Activated CD4-positive, alpha-beta memory T cell treated with anti-CD3 and anti-CD28 coated beads for 36 hours (primary cell): ENCODE measurements at regions of chr1 and their contacts with region 1.

Region 1: GRCh38 chr1:45686317-45687013 is at the start of gene GPBP1L1:
- DNase-seq: peak; percentile 99
- H3K4me3 Mint-ChIP-seq: peak within 1 kb of the TSS; percentile 99
- H3K27ac Mint-ChIP-seq: peak within 1 kb of the TSS; percentile 99
- H3K4me1 Mint-ChIP-seq: peaks cover 50% of the 10 kb centered on the region
- H3K27me3 Mint-ChIP-seq: no peaks in the 10 kb centered on the region
- total RNA-seq, gene GPBP1L1: 106 TPM

Region 2: GRCh38 chr1:45339789-45340570 is 346.5 kb before region 1 on chr1 and contains the starts of genes MUTYH and TOE1:
- CTCF ChIA-PET with region 1: no interaction called
- POLR2A ChIA-PET with region 1: interaction called, 4 read pairs
- intact Hi-C with region 1: loop called (anchors 1 kb)
- DNase-seq: peak; percentile 97
- H3K4me3 Mint-ChIP-seq: peak within 1 kb of the TSS; percentile 93
- H3K27ac Mint-ChIP-seq: peak within 1 kb of the TSS; percentile 98
- H3K4me1 Mint-ChIP-seq: peaks cover 34% of the 10 kb centered on the region
- H3K27me3 Mint-ChIP-seq: no peaks in the 10 kb centered on the region
- total RNA-seq, gene MUTYH: 49.2 to 51.8 TPM
- total RNA-seq, gene TOE1: 22.8 to 23.1 TPM

Region 3: DNA sequence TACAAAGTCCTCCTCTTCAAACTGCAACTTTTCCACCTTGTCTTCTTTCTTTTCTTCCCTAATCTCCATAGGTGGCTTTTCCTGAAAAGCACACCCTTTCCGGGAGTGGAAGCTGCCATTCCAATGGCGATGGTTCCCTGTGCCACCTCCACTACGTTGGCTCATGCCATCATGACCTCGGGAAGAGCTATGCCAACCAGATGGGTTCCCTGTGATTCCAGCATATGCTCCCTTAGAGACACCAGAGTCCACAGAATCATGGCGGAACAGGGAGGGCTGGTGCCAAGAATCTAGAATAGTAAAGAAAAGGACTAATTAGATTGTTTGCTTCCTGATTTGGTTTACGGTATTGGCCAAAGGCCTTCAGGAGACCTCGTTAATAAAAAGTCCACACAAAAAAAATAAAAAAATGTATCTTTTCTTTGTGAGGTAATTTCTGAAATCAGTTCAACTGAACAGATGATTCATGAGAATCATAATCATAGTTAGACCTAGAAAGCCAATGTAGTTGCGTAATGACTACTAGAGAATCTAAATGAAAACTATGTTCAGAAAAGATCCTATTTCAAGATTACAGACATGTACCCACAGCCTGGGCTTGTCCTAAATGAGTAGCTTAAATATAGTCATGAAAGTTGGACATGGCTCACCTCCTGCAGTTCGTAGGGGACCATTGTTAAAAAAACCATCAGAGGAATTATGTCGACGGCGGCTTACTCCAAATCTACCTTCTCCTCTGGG is 31.8 kb before region 1 on chr1:
- CTCF ChIA-PET with region 1: interaction called, 13 read pairs
- POLR2A ChIA-PET with region 1: interaction called, 16 read pairs
- intact Hi-C with region 1: loop called (anchors 1 kb)
- DNase-seq: peak; percentile 34
- H3K4me3 Mint-ChIP-seq: peak overlapping the region; percentile 20
- H3K27ac Mint-ChIP-seq: peak overlapping the region; percentile 61
- H3K4me1 Mint-ChIP-seq: peaks cover 22% of the 10 kb centered on the region
- H3K27me3 Mint-ChIP-seq: no peaks in the 10 kb centered on the region

Region 4: DNA sequence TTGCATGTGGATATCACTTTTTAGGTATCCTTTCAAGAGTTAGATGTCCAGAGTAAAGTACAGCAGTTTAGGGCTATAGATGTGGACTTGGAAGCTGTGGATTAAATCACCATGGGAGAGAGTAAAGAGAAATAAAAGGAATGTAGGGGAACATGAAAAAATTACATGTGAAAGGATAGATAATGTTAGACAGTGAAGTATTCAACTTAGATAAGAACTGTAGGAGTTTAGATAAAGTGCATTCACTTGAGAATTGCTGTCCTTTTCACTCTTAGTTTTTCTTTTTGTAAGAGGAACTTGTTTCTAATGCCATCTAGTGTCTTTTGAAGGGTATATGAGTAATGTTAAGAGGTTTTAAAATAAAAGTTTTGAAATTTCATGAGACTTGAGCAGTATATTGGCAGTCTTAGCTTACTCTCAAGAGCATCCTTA is 157.0 kb after region 1 on chr1:
- CTCF ChIA-PET with region 1: no interaction called
- POLR2A ChIA-PET with region 1: no interaction called
- intact Hi-C with region 1: loop called (anchors 2 kb)
- DNase-seq: no peak
- H3K4me3 Mint-ChIP-seq: no peak overlapping the region
- H3K27ac Mint-ChIP-seq: peak overlapping the region; percentile 2
- H3K4me1 Mint-ChIP-seq: peaks cover 13% of the 10 kb centered on the region
- H3K27me3 Mint-ChIP-seq: no peaks in the 10 kb centered on the region

Region 5: GRCh38 chr1:46247436-46248121 is 561.1 kb after region 1 on chr1 and contains the start of gene RAD54L:
- CTCF ChIA-PET with region 1: no interaction called
- POLR2A ChIA-PET with region 1: interaction called, 4 read pairs
- intact Hi-C with region 1: loop called (anchors 1 kb)
- DNase-seq: peak; percentile 99
- H3K4me3 Mint-ChIP-seq: peak within 1 kb of the TSS; percentile 99
- H3K27ac Mint-ChIP-seq: peak within 1 kb of the TSS; percentile 91
- H3K4me1 Mint-ChIP-seq: peaks cover 26% of the 10 kb centered on the region
- H3K27me3 Mint-ChIP-seq: no peaks in the 10 kb centered on the region
- total RNA-seq, gene RAD54L: 64.9 to 65.0 TPM

Region 6: DNA sequence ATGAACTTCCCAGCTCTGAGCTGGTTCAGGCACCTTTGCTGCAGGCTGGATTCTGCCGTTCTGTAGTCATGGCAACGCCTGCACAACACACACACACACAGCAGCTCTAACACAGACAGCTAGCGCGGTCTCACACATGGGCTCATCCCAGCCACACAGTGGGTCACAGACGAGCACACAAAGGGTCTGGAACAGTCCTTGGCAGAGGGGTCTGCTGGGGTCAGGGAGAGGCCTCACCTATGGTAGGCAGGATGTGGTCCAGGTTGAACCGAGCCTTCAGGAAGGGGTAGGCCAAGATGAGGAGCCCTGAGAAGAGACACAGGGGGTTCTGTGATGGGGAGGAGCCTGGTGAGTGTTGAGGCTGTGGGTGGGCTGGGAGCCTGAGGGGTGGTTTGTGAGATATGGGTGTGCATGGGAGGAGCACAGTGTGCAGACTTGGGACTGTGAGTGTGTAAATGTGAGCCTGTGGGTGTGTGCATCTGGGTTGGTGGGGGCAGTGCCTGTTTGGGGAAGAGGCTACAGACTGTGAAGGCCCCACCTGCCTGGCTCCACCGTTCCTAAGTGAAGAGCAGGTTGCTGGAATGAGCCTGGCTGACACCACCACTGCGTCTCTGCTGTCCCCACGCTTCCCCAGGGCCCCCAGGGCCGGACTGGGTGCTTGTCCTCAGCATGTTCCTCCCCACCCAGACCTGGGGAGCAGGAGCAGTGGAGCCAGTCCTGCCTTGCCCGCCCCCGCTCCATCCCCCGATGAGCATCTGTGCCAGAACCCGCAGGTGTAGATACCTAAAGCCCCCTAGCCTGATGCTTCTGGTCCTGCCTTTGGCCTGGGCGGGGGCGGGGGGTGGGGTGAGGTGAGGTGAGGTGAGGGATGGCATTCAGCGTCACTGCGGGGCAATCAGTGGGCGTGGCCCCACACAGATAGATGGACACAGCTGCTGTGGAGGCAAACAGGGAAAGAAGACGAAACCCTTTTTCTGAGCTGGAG is 863.5 kb after region 1 on chr1:
- CTCF ChIA-PET with region 1: no interaction called
- POLR2A ChIA-PET with region 1: no interaction called
- intact Hi-C with region 1: no loop called
- DNase-seq: peak; percentile 49
- H3K4me3 Mint-ChIP-seq: no peak overlapping the region
- H3K27ac Mint-ChIP-seq: no peak overlapping the region
- H3K4me1 Mint-ChIP-seq: peaks cover 9% of the 10 kb centered on the region
- H3K27me3 Mint-ChIP-seq: peaks cover 16% of the 10 kb centered on the region